Caco-2 (cell line): ENCODE measurements at regions of chr15 and their contacts with region 1.

Region 1: GRCh38 chr15:100918034-100918689 is 995 bp upstream of the LRRK1 start:
- DNase-seq: peak; percentile 83 to 89
- H3K4me3 ChIP-seq: peak overlapping the region; percentile 83
- H3K4me3 Mint-ChIP-seq: peak overlapping the region; percentile 91
- H3K27ac Mint-ChIP-seq: no peak overlapping the region
- H3K4me1 ChIP-seq: no peaks in the 10 kb centered on the region
- H3K4me1 Mint-ChIP-seq: peaks cover 6% of the 10 kb centered on the region
- H3K27me3 ChIP-seq: no peaks in the 10 kb centered on the region
- H3K27me3 Mint-ChIP-seq: no peaks in the 10 kb centered on the region
- CTCF ChIP-seq: peak; percentile 76 to 87

Region 2: DNA sequence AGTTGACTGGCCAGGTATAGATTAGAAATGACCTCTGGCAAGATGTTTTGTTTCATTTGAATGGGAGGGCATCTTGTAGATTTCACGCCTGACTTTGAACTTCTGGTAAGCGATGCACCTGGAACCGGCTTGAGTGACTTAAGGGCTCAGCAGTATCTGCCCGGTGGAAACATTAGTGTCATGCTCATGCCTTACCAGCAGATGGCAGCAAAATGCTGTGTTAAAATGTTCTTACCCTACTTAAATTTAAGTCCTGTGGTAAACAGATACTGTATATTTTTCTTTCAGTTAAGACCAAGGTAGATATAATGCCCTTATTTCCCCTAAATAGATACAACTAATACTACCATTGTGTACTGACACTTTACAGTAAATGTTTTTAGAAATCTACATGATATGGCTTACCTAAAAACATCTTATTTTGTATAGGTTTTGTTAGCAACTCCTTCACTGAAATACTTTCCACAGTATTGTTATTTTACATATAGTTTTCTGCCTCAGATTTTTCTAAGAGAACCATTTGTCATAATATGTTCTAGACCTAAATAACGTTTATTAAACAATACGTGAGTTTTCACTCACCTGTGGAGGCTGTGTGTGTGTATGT is 290.3 kb before region 1 on chr15:
- CTCF ChIA-PET with region 1: no interaction called
- POLR2A ChIA-PET with region 1: no interaction called
- intact Hi-C with region 1: loop called (anchors 5 kb)
- DNase-seq: peak; percentile 57 to 67
- H3K4me3 ChIP-seq: no peak overlapping the region
- H3K4me3 Mint-ChIP-seq: no peak overlapping the region
- H3K27ac Mint-ChIP-seq: no peak overlapping the region
- H3K4me1 ChIP-seq: no peaks in the 10 kb centered on the region
- H3K4me1 Mint-ChIP-seq: peaks cover 2% of the 10 kb centered on the region
- H3K27me3 ChIP-seq: no peaks in the 10 kb centered on the region
- H3K27me3 Mint-ChIP-seq: no peaks in the 10 kb centered on the region
- CTCF ChIP-seq: peak; percentile 59 to 69

Region 3: GRCh38 chr15:100873029-100873677 is 45.0 kb before region 1 on chr15:
- CTCF ChIA-PET with region 1: no interaction called
- POLR2A ChIA-PET with region 1: no interaction called
- intact Hi-C with region 1: no loop called
- DNase-seq: peak; percentile 71 to 77
- H3K4me3 ChIP-seq: no peak overlapping the region
- H3K4me3 Mint-ChIP-seq: no peak overlapping the region
- H3K27ac Mint-ChIP-seq: no peak overlapping the region
- H3K4me1 ChIP-seq: peaks cover 8% of the 10 kb centered on the region; the same call in 1 of the 2 replicates
- H3K4me1 Mint-ChIP-seq: peaks cover 5% of the 10 kb centered on the region
- H3K27me3 ChIP-seq: no peaks in the 10 kb centered on the region
- H3K27me3 Mint-ChIP-seq: no peaks in the 10 kb centered on the region
- CTCF ChIP-seq: peak; percentile 70 to 82

Region 4: DNA sequence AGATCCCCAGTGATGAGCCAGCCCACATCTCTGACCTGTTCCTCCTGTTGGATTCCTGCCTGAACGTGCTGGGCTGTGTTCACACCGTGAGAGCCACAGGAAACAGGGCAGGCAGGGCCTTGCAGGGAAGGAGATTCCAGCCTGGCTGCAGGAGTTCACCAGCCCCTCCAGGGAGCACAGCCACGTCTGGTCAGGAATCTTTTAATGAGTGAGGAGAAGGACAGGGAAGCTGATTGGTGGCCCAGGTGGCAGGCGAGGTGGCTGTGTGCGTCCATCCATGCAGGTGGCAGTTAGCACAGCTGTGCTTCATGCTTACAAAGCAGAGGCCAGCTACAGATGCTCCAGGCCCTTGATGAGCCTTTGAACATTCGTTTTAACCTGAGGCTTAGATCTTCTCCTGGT is 11.5 kb after region 1 on chr15:
- CTCF ChIA-PET with region 1: interaction called, 11 read pairs
- POLR2A ChIA-PET with region 1: no interaction called
- intact Hi-C with region 1: no loop called
- DNase-seq: peak in 1 of 2 experiments; percentile 51
- H3K4me3 ChIP-seq: no peak overlapping the region
- H3K4me3 Mint-ChIP-seq: peak overlapping the region; percentile 21
- H3K27ac Mint-ChIP-seq: peak overlapping the region; percentile 79
- H3K4me1 ChIP-seq: peaks cover 14% of the 10 kb centered on the region
- H3K4me1 Mint-ChIP-seq: peaks cover 21% of the 10 kb centered on the region
- H3K27me3 ChIP-seq: no peaks in the 10 kb centered on the region
- H3K27me3 Mint-ChIP-seq: no peaks in the 10 kb centered on the region
- CTCF ChIP-seq: no peak

Region 5: DNA sequence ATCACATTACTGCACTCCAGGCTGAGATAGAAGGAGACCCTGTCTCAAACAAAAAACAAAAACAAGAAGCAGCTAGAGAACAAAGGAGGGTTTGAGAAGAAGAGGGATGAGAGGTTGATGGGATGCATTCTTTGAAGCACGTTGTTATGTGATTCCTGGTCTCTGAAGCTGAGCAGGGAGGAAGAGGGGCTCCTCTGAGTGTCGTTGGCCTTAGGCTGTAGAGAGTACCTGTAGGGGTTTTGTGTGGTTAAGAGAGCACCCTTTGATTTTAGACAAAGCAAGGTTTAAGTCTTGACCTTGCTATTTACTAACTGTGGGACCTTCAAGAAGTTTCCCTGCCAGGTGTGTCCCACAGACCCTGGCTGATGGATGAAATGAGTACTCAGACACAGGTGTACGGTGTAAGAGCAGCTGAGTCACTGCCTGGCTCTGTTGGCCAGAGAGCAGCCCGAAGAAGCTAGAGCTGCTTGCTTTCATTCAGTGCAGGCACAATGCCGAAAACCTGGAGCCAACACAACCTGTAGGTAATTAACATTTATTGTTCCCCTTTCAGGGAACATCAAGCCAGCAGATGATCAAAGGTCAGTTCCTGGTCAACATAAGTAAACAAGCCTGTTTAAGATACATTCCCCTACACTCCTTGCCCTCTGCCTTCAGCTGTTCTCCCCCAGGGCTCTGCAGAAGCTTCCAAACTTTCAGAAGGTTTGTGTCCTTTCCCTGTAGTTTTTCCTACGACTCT is 68.2 kb after region 1 on chr15:
- CTCF ChIA-PET with region 1: no interaction called
- POLR2A ChIA-PET with region 1: interaction called, 3 read pairs
- intact Hi-C with region 1: loop called (anchors 1 kb)
- DNase-seq: peak; percentile 58 to 73
- H3K4me3 ChIP-seq: no peak overlapping the region
- H3K4me3 Mint-ChIP-seq: peak overlapping the region; percentile 34
- H3K27ac Mint-ChIP-seq: peak overlapping the region; percentile 68
- H3K4me1 ChIP-seq: peaks cover 23% of the 10 kb centered on the region
- H3K4me1 Mint-ChIP-seq: peaks cover 19% of the 10 kb centered on the region
- H3K27me3 ChIP-seq: no peaks in the 10 kb centered on the region
- H3K27me3 Mint-ChIP-seq: no peaks in the 10 kb centered on the region
- CTCF ChIP-seq: no peak

Region 6: DNA sequence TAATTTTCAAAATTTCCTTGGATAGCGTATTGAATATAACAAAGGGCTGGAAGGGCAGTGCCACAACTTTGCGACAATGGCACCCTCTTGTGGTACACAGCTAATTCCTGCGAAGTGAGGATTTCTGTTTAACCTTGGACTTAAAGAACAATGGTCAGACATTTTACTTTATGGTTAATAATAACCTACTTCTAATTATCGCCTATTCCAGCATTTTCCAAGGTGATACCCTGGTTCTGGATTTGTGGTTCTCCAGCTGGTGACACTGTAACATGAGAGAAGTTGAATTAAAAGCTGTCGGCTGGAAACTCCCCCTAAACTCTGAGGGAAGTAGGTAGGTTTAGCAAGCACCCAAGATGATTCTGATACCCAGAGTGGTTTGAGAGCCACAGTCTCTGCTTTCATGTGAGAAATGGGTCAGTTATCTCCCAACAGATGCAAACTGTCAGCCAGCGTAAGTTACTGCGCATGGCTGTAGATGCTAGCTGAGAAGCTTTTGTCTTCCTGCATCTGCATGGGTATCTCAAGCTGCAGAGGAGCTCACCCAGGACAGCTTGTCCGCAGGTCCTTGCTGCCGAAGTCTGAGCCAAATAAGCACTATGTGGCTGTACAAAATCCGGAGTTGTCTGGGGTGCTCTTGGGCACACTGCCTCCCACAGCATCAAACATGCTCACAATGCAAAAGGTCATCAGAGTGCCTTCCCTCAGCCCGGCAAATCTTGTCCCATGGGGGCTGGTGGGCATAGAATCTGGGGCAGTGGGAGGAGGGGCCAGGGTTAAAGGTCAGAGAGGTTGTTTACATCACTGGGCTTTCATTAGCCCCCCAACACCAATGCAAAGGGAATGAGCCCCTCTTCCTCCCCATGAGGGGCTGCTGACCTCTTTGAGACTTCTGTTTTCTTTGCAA is 340.3 kb after region 1 on chr15:
- CTCF ChIA-PET with region 1: no interaction called
- POLR2A ChIA-PET with region 1: no interaction called
- intact Hi-C with region 1: loop called (anchors 5 kb)
- DNase-seq: peak in 1 of 2 experiments; percentile 64
- H3K4me3 ChIP-seq: no peak overlapping the region
- H3K4me3 Mint-ChIP-seq: no peak overlapping the region
- H3K27ac Mint-ChIP-seq: no peak overlapping the region
- H3K4me1 ChIP-seq: no peaks in the 10 kb centered on the region
- H3K4me1 Mint-ChIP-seq: no peaks in the 10 kb centered on the region
- H3K27me3 ChIP-seq: no peaks in the 10 kb centered on the region
- H3K27me3 Mint-ChIP-seq: peaks cover 2% of the 10 kb centered on the region
- CTCF ChIP-seq: peak; percentile 70 to 84